Activated B cell treated with CpG ODN at 0.5 μM for 24 hours (primary cell): ENCODE measurements at regions of chr12 and their contacts with region 1.

Region 1: DNA sequence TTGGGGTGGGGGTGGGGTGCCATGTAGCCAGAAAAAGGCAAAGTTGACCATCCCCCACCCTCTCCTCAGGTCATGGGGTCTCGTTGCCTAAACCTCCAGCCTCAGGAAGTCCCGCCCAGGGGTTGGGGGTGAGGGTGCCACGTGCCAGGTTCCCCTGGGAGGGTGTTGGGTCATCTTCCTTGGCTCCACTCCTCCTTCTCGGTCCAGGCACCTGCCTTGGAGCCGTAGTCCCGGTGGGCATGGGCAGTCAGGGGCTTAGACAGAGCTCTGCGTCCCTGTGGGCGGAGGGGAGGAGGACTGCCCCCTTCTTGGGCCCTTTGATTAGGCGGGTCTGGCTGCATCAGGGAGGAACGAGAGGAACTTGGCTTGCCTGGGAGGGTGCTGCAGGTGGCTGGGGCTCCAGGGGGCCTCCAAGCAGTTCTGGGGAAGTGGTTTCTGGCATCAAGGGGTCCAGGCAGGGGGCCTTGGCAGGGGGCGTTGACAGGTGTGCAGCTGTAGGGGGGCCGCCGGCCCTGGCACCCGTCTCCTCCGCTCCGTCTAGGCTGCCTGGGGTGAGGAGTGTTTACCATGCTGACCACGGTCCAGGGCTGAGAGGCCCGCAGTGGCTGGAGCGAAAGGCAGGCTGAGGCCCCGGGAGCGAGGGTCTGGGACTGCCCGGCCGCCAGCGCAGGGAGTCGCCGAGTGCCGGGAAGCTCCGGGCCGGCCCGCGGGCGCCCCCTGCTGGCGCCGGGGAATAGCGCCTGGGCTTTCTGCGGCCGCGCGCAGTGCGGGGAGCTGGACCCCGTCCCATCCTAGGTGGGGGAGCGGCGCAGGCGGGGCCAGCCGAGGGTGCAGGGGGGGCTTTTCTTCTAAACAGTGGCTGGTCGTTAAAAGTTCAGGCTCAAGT is 7.9 kb downstream of the SETD1B start:
- DNase-seq: peak; percentile 81
- ATAC-seq: peak; percentile 83
- H3K4me3 Mint-ChIP-seq: peak overlapping the region; percentile 74
- H3K27ac Mint-ChIP-seq: peak overlapping the region; percentile 18
- H3K4me1 Mint-ChIP-seq: peaks cover 54% of the 10 kb centered on the region
- H3K27me3 Mint-ChIP-seq: no peaks in the 10 kb centered on the region
- CTCF ChIP-seq: peak; percentile 100

Region 2: DNA sequence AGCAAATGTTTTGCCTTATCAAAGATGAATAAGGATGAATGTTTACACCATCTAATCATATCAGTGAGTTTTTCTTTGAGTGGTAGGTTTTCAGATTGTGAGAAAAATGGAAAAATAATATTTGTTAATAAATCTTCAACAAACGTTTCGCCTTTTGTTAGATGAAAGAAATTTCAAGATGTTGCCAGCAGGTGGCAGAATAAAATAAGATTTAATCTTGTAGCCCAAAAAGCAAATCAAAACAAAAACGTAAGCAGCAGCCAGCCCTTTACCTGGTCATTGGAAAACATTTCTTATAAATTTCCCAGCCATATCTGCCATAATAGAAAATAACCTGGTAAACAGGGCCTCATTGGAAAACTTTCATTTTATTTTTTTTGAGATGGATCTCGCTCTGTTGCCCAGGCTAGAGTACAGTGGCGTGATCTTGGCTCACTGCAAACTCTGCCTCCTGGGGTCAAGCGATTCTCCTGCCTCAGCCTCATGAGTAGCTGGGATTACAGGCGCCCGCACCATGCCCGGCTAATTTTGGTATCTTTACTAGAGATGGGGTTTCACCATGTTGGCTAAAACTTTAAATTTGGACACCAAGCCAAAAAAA is 114.5 kb before region 1 on chr12:
- CTCF ChIA-PET with region 1: interaction called, 16 read pairs
- POLR2A ChIA-PET with region 1: no interaction called
- intact Hi-C with region 1: loop called (anchors 1 kb)
- DNase-seq: no peak
- ATAC-seq: peak; percentile 31
- H3K4me3 Mint-ChIP-seq: no peak overlapping the region
- H3K27ac Mint-ChIP-seq: no peak overlapping the region
- H3K4me1 Mint-ChIP-seq: no peaks in the 10 kb centered on the region
- H3K27me3 Mint-ChIP-seq: peaks cover 2% of the 10 kb centered on the region
- CTCF ChIP-seq: no peak

Region 3: DNA sequence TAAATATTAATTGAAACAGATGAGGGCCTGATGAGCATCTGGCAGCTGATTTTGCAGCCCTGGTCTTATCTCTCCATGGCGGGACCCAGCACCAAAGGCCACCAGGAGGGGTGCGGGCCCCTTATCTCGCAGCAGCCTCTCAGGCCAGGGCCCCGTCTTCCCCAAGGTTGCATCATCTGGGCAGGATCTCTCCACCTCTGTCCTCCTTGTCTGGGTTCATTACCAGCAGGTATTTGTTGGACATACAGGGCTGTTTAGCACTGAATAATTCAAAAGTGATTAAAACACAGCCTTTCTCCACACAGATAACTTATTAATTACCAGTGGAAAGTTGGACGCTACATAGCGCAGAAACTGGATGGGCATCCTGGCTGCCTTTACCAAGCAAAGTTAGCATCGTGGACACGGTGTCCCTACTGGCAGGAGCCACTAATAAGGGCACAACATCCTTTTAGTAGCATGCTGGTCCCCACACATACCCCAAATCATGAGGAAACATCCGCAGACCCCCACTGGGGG is 73.3 kb before region 1 on chr12:
- CTCF ChIA-PET with region 1: no interaction called
- POLR2A ChIA-PET with region 1: no interaction called
- intact Hi-C with region 1: no loop called
- DNase-seq: no peak
- ATAC-seq: no peak
- H3K4me3 Mint-ChIP-seq: no peak overlapping the region
- H3K27ac Mint-ChIP-seq: no peak overlapping the region
- H3K4me1 Mint-ChIP-seq: no peaks in the 10 kb centered on the region
- H3K27me3 Mint-ChIP-seq: no peaks in the 10 kb centered on the region
- CTCF ChIP-seq: no peak

Region 4: GRCh38 chr12:121781998-121782979 is 29.4 kb before region 1 on chr12:
- CTCF ChIA-PET with region 1: interaction called, 27 read pairs
- POLR2A ChIA-PET with region 1: interaction called, 1,155 read pairs
- intact Hi-C with region 1: no loop called
- DNase-seq: peak; percentile 61
- ATAC-seq: peak; percentile 76
- H3K4me3 Mint-ChIP-seq: peak overlapping the region; percentile 84
- H3K27ac Mint-ChIP-seq: peak overlapping the region; percentile 98
- H3K4me1 Mint-ChIP-seq: peaks cover 74% of the 10 kb centered on the region
- H3K27me3 Mint-ChIP-seq: no peaks in the 10 kb centered on the region
- CTCF ChIP-seq: no peak